Esophagus muscularis mucosa (tissue), 4 donors: ENCODE measurements at regions of chr19 and their contacts with region 1.

Region 1: DNA sequence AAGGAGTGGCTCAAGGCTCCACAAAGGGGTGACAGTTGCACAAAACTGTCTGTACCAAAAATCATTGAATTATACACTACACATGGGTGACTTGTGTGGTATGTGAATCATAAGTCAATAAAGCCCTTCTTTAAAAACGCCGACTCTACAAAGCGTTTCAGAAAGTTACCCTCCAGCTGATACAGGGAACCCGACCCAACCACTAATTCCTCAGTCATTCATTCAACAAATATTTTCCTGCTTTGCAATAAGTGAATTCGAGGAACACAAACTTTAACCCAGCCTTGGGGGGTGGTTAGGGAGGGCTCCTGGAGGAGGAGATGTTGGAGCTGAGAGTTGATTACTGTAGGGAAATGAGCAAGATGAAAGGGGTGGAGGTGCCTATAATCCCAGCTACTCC is 32.0 kb downstream of the LTBP4 start:
- DNase-seq: no peak
- H3K4me3 ChIP-seq: no peak overlapping the region
- H3K27ac ChIP-seq: no peak overlapping the region
- H3K4me1 ChIP-seq: peaks cover 6 to 19% (median 10%) of the 10 kb centered on the region in 4 donors
- H3K27me3 ChIP-seq: no peaks in the 10 kb centered on the region
- CTCF ChIP-seq: no peak
- EP300 ChIP-seq: no peak
- POLR2A ChIP-seq: no peak

Region 2: DNA sequence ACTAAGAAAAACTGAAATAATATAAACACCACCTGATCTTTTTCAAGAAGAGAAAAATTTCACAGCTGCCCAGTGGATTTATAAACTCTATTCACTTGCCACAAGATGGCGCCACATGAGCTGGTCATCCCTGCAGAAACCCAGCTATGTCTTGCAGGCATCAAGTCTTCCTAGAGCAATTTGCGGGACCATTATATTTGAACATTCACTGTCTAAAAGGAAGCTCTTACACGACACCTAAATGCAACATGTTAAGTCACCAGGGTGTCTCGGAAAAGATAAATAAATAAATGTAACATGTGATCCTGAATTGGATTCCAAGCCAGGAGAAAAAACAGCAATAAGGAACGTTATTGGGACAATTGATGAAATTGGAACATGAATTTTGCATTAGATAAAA is 327.8 kb before region 1 on chr19:
- intact Hi-C with region 1: loop called (anchors 10 kb)
- DNase-seq: no peak
- H3K4me3 ChIP-seq: no peak overlapping the region
- H3K27ac ChIP-seq: no peak overlapping the region
- H3K4me1 ChIP-seq: peaks cover 0 to 10% (median 0%) of the 10 kb centered on the region in 4 donors
- H3K27me3 ChIP-seq: no peaks in the 10 kb centered on the region
- CTCF ChIP-seq: peak; percentile 72 to 77 (median 76)
- EP300 ChIP-seq: no peak
- POLR2A ChIP-seq: no peak

Region 3: DNA sequence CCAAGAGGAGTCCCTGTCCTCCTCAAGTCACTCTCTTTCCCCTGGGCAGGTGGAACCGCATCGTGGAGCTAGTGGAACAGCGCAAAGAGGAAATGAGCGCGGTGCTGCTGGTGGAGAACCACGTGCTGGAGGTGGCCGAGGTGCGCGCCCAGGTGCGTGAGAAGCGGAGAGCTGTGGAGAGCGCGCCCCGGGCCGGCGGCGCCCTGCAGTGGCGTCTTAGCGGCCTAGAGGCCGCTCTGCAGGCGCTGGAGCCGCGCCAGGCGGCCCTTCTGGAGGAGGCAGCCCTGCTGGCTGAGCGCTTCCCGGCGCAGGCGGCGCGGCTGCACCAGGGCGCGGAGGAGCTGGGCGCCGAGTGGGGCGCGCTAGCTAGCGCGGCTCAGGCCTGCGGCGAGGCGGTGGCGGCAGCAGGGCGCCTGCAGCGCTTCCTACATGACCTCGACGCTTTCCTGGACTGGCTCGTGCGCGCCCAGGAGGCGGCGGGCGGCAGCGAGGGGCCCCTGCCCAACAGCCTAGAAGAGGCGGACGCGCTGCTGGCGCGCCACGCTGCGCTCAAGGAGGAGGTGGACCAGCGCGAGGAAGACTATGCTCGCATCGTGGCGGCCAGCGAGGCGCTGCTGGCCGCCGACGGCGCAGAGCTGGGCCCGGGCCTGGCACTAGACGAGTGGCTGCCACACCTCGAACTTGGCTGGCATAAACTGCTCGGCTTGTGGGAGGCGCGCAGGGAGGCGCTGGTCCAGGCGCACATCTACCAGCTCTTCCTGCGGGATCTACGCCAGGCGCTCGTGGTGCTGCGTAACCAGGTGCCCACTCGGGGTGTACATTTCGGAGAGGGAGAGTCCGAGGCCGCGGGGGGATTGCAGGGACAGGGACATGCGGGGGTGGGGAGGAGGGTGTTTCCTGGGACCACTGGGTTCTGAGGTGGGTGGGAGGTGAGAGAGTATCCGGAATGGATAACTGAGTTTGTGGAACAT is 113.6 kb before region 1 on chr19:
- intact Hi-C with region 1: no loop called
- DNase-seq: no peak
- H3K4me3 ChIP-seq: peak overlapping the region in 1 of 4 donors; percentile 27
- H3K27ac ChIP-seq: no peak overlapping the region
- H3K4me1 ChIP-seq: peaks cover 0 to 11% (median 7%) of the 10 kb centered on the region in 4 donors
- H3K27me3 ChIP-seq: peaks cover 0 to 30% (median 3%) of the 10 kb centered on the region in 4 donors
- CTCF ChIP-seq: peak in 1 of 3 experiments; percentile 16
- EP300 ChIP-seq: no peak
- POLR2A ChIP-seq: no peak